Caco-2 (cell line): ENCODE measurements at regions of chr2 and their contacts with region 1.

Region 1: GRCh38 chr2:64865073-64865830 is 123.9 kb upstream of the SLC1A4 start:
- DNase-seq: peak in 1 of 2 experiments; percentile 70
- H3K4me3 ChIP-seq: peak overlapping the region; percentile 72
- H3K4me3 Mint-ChIP-seq: peak overlapping the region; percentile 61
- H3K27ac Mint-ChIP-seq: no peak overlapping the region
- H3K4me1 ChIP-seq: no peaks in the 10 kb centered on the region; the same call in 1 of the 2 replicates
- H3K4me1 Mint-ChIP-seq: peaks cover 7% of the 10 kb centered on the region
- H3K27me3 ChIP-seq: no peaks in the 10 kb centered on the region
- H3K27me3 Mint-ChIP-seq: peaks cover 5% of the 10 kb centered on the region
- CTCF ChIP-seq: peak; percentile 31 to 80

Region 2: DNA sequence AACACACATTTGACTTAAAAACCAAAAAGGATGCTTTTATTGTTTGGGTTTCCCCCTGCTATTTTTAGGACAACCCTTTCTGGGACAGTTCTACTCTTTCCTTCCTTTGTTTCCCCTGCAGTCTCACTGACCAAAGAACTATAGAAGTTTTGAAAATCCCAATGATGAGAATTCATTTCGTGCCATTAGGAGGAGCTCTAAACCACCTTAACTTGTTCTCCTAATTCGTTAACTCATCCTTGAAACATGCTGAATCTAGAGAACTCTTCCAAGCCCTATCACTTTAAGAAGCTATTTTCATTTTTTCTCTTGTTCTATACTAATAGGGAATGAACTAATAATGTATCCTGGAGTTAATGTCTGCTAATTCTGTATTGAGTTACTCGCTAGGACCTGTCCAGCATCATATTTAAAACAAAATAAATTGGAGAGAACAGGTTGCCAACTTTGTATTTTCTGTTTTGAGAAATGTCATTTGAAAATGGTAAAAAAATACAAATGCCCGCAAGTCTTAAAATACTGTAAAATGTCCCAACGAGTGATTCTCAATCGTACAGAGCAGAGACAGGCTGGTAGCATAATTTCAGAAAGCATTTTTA is 278.3 kb before region 1 on chr2:
- CTCF ChIA-PET with region 1: interaction called, 3 read pairs
- POLR2A ChIA-PET with region 1: no interaction called
- intact Hi-C with region 1: loop called (anchors 1 kb)
- DNase-seq: peak in 1 of 2 experiments; percentile 33
- H3K4me3 ChIP-seq: no peak overlapping the region
- H3K4me3 Mint-ChIP-seq: no peak overlapping the region
- H3K27ac Mint-ChIP-seq: no peak overlapping the region
- H3K4me1 ChIP-seq: no peaks in the 10 kb centered on the region
- H3K4me1 Mint-ChIP-seq: no peaks in the 10 kb centered on the region
- H3K27me3 ChIP-seq: no peaks in the 10 kb centered on the region
- H3K27me3 Mint-ChIP-seq: no peaks in the 10 kb centered on the region
- CTCF ChIP-seq: peak; percentile 48 to 63

Region 3: GRCh38 chr2:64595397-64596160 is 269.7 kb before region 1 on chr2:
- CTCF ChIA-PET with region 1: interaction called, 3 read pairs
- POLR2A ChIA-PET with region 1: no interaction called
- intact Hi-C with region 1: loop called (anchors 2 kb)
- DNase-seq: peak in 1 of 2 experiments; percentile 26
- H3K4me3 ChIP-seq: no peak overlapping the region
- H3K4me3 Mint-ChIP-seq: no peak overlapping the region
- H3K27ac Mint-ChIP-seq: no peak overlapping the region
- H3K4me1 ChIP-seq: no peaks in the 10 kb centered on the region
- H3K4me1 Mint-ChIP-seq: no peaks in the 10 kb centered on the region
- H3K27me3 ChIP-seq: no peaks in the 10 kb centered on the region
- H3K27me3 Mint-ChIP-seq: no peaks in the 10 kb centered on the region
- CTCF ChIP-seq: peak in 1 of 2 experiments; percentile 58

Region 4: GRCh38 chr2:64750817-64751285 is 114.4 kb before region 1 on chr2:
- CTCF ChIA-PET with region 1: interaction called, 3 read pairs
- POLR2A ChIA-PET with region 1: interaction called, 3 read pairs
- intact Hi-C with region 1: loop called (anchors 1 kb)
- DNase-seq: peak; percentile 99
- H3K4me3 ChIP-seq: peak overlapping the region; percentile 73
- H3K4me3 Mint-ChIP-seq: peak overlapping the region; percentile 96
- H3K27ac Mint-ChIP-seq: peak overlapping the region; percentile 93
- H3K4me1 ChIP-seq: peaks cover 18% of the 10 kb centered on the region; the same call in 1 of the 2 replicates
- H3K4me1 Mint-ChIP-seq: peaks cover 16% of the 10 kb centered on the region
- H3K27me3 ChIP-seq: no peaks in the 10 kb centered on the region
- H3K27me3 Mint-ChIP-seq: no peaks in the 10 kb centered on the region
- CTCF ChIP-seq: no peak

Region 5: GRCh38 chr2:64767670-64768468 is 97.4 kb before region 1 on chr2:
- CTCF ChIA-PET with region 1: no interaction called
- POLR2A ChIA-PET with region 1: no interaction called
- intact Hi-C with region 1: loop called (anchors 5 kb)
- DNase-seq: peak; percentile 89 to 90
- H3K4me3 ChIP-seq: peak overlapping the region; percentile 47
- H3K4me3 Mint-ChIP-seq: peak overlapping the region; percentile 78
- H3K27ac Mint-ChIP-seq: peak overlapping the region; percentile 84
- H3K4me1 ChIP-seq: peaks cover 28% of the 10 kb centered on the region
- H3K4me1 Mint-ChIP-seq: peaks cover 27% of the 10 kb centered on the region
- H3K27me3 ChIP-seq: no peaks in the 10 kb centered on the region
- H3K27me3 Mint-ChIP-seq: no peaks in the 10 kb centered on the region
- CTCF ChIP-seq: no peak